GM18951 (cell line): ENCODE measurements at regions of chr14 and their contacts with region 1.

Region 1: DNA sequence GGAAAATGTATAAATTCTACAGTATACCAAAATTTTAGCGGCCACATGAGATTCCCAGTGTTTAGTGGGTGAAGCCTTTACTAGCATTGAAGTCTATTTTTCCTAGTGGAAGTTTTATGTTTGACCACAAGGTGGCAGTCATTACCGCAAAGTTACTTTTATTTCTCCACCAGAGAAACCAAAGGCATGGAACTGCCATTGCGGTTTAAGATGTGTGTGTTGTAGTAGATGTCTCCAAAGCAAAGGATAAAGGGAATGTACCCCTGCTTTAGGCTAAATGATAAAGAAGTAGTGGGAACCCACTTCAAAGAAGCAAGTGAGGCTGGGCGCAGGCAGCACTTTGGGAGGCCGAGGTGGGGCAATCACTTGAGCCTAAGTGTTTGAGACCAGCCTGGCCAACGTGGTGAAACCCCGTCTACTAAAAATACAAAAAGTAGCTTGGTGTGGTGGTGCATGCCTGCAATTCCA is 140.5 kb downstream of the PRKCH start:
- POLR2A ChIP-seq: no peak

Region 2: DNA sequence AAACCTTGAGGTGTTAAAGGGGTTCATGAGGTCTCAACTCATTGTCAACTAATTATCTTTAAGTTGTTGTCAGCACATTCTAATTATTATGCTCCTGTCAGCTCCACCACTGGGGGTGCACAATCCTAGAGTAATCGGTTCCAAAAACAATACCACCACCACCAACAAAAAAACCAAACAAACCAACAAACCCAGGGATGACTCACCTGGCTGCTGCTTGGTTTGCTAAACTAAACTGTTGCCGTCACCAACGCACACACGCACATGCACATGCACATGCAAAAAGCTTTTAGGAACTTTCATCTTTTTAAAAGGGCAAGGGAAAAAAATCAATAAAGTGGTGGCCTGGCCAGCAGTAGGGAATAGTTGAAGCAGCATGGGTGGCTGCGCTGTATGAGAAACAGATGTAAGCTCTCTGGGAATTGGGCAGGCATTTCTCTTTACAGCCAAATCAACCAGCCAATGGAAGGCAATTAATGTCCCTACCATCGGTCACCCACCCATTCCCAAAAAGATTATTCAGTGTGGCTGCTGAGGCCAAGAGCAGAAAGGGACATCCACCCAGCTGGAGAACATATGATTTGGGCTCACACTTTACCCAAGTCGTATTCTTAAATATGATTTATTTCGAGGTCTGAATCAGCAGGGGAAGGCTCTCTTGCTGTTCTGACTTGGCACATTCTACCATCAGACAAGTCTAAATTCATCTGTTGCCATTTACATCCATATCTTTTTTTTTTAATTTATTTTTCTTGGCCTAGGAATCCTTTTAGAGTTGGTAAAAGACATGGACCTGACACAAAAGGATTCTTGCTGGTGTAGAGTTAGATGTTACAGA is 200.7 kb before region 1 on chr14:
- in situ Hi-C with region 1: no loop called
- POLR2A ChIP-seq: no peak

Region 3: GRCh38 chr14:61730756-61731373 is 269.0 kb after region 1 on chr14:
- in situ Hi-C with region 1: loop called (anchors 10 kb)
- POLR2A ChIP-seq: no peak

Region 4: DNA sequence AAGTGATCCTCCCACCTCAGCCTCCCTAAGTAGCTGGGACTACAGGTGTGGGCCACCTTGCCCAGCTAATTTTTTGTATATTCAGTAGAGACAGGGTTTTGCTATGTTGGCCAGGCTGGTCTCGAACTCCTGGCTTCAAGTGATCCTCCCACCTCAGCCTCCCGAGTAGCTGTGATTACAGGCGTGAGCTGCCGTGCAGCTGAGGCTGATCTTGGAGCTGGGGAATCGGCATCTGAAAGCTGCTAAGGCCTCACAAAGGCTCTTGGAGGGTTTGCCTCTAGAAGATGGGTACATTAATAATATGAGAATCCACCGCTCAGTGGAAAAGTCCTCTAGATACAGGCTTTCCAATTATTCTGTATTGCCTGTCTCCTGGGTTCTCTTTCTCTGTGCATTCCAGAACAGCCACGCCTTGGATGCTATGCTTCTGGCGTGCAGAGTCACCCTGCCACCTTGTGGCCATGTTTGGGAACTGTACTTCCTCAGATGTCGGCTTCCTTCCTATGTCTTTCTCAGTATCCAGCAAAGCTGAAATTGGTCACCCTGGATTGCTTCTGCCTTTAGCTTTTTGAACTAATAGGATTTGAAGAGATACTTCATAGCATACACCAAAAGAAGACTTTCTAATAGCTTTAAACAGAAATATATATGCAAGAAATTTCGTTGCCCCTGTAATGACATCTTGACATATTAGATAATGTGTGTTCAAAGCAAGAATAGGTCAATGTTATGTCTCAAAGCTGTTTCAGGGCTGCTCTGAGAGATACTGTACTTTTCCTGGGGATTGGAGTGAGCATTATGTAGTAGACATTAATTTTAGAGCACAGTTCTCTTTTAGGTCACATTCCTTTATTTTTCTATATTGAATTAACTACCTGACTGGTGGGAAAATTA is 375.7 kb after region 1 on chr14:
- in situ Hi-C with region 1: loop called (anchors 5 kb)
- POLR2A ChIP-seq: no peak

Region 5: GRCh38 chr14:62126879-62127478 is 665.1 kb after region 1 on chr14:
- in situ Hi-C with region 1: loop called (anchors 10 kb)
- POLR2A ChIP-seq: no peak

Region 6: GRCh38 chr14:62143245-62143644 is 681.4 kb after region 1 on chr14:
- in situ Hi-C with region 1: no loop called
- POLR2A ChIP-seq: no peak